Panc1 (cell line): ENCODE measurements at regions of chr11 and their contacts with region 1.

Region 1: GRCh38 chr11:92136797-92137196 is 87.8 kb upstream of the FAT3 start:
- DNase-seq: no peak
- ATAC-seq: no peak
- H3K4me3 ChIP-seq: no peak overlapping the region
- H3K27ac ChIP-seq: no peak overlapping the region
- H3K4me1 ChIP-seq: no peaks in the 10 kb centered on the region
- H3K27me3 ChIP-seq: no peaks in the 10 kb centered on the region
- CTCF ChIP-seq: peak; percentile 18

Region 2: DNA sequence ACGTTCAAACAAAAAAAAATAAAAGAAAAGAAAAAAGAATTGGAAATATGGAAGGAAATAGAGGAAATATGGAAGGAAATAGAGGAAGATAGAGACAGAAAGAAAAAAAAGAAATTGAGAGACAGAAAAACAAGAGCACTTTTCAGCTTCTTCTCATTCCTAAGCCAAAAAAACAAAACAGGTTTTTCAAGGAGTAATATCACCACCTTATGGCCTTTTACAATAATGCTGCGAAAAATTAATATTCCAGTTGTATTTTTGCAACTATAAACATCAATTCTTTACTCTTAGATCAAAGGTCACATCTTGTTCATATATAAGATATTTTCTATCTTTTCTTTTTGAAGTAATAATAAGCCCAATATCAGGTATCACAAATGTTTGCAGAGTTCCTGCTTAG is 416.1 kb after region 1 on chr11:
- CTCF ChIA-PET with region 1: interaction called, 11 read pairs
- POLR2A ChIA-PET with region 1: no interaction called
- in situ Hi-C with region 1: no loop called
- intact Hi-C with region 1: no loop called
- DNase-seq: no peak
- ATAC-seq: no peak
- H3K4me3 ChIP-seq: no peak overlapping the region
- H3K27ac ChIP-seq: no peak overlapping the region
- H3K4me1 ChIP-seq: no peaks in the 10 kb centered on the region
- H3K27me3 ChIP-seq: no peaks in the 10 kb centered on the region
- CTCF ChIP-seq: peak; percentile 18; the same call in 1 of the 2 replicates

Region 3: DNA sequence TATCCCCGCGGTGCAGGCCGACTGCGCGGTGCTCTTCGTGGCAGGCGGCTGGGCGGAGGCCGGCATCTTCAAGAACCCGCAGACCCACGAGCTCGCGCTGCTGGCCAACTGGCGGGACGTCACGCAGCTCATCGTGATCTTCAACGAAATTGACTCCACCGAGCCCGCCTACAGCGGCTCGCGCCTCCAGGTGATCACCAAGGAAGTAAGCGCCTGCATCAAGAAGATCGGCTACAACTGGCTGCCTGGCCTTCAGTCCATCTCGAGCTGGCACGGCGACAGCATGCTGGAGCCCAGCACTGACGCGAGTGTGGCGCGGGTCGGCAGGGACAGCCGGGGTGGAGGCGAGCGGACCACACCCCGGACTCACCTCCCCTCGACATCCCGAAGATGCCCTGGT is 778.8 kb after region 1 on chr11:
- CTCF ChIA-PET with region 1: no interaction called
- POLR2A ChIA-PET with region 1: interaction called, 12 read pairs
- in situ Hi-C with region 1: no loop called
- intact Hi-C with region 1: no loop called
- DNase-seq: no peak
- ATAC-seq: no peak
- H3K4me3 ChIP-seq: no peak overlapping the region
- H3K27ac ChIP-seq: no peak overlapping the region
- H3K4me1 ChIP-seq: no peaks in the 10 kb centered on the region
- H3K27me3 ChIP-seq: no peaks in the 10 kb centered on the region
- CTCF ChIP-seq: no peak